Aorta (tissue), 5 donors: ENCODE measurements at regions of chr6 and their contacts with region 1.

Region 1: DNA sequence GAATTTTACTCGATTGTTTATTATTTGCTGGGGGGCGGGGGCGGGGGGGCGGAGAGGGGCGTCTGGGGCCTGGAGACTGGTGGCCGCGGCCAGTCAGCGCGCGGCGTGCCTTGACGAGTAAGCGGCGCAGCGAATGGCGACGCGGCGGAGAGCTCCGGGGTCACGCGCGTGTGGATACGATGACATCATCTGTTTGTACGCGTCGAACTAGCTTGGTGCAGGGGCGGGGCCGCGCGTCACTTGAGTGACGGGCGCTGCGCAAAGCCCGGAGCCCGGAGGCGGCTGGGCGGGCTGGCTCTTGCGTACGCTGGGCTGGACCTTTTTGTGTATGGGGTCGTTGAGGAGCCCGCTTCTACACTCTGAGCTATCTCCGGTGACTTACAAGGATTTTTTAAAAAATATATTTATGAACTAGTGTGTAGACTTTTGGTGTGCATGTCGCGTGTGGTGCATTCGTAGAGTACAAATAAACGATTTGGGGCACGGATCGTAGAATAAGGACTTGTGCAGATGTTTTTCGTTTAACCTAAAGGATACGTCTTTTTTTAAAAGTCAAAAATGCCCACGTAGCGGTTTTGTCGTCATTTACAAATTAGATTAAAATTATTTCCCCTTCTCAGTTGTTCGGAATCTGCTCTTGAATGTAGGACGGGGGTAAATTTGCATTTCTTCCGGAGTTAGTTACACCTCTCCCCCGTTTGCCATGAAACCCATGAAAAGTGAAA is 2.2 kb upstream of the FOXO3 start:
- DNase-seq: peak; percentile 99
- ATAC-seq: peak; percentile 89
- H3K4me3 ChIP-seq: peak overlapping the region; percentile 57 to 94
- H3K27ac ChIP-seq: peak overlapping the region; percentile 58 to 93
- H3K4me1 ChIP-seq: no peaks in the 10 kb centered on the region
- H3K27me3 ChIP-seq: no peaks in the 10 kb centered on the region

Region 2: GRCh38 chr6:108651340-108652227 is 93.0 kb after region 1 on chr6:
- intact Hi-C with region 1: loop called in 1 of 2 experiments (anchors 2 kb)
- DNase-seq: peak; percentile 66 to 79
- ATAC-seq: peak; percentile 62
- H3K4me3 ChIP-seq: no peak overlapping the region
- H3K27ac ChIP-seq: peak overlapping the region; percentile 86 to 98
- H3K4me1 ChIP-seq: peaks cover 7 to 48% of the 10 kb centered on the region in 2 donors
- H3K27me3 ChIP-seq: no peaks in the 10 kb centered on the region

Region 3: GRCh38 chr6:108782179-108783041 is 223.9 kb after region 1 on chr6:
- intact Hi-C with region 1: loop called (anchors 5 kb)
- DNase-seq: peak; percentile 88 to 93
- ATAC-seq: peak; percentile 91
- H3K4me3 ChIP-seq: no peak overlapping the region
- H3K27ac ChIP-seq: no peak overlapping the region
- H3K4me1 ChIP-seq: no peaks in the 10 kb centered on the region
- H3K27me3 ChIP-seq: no peaks in the 10 kb centered on the region

Region 4: DNA sequence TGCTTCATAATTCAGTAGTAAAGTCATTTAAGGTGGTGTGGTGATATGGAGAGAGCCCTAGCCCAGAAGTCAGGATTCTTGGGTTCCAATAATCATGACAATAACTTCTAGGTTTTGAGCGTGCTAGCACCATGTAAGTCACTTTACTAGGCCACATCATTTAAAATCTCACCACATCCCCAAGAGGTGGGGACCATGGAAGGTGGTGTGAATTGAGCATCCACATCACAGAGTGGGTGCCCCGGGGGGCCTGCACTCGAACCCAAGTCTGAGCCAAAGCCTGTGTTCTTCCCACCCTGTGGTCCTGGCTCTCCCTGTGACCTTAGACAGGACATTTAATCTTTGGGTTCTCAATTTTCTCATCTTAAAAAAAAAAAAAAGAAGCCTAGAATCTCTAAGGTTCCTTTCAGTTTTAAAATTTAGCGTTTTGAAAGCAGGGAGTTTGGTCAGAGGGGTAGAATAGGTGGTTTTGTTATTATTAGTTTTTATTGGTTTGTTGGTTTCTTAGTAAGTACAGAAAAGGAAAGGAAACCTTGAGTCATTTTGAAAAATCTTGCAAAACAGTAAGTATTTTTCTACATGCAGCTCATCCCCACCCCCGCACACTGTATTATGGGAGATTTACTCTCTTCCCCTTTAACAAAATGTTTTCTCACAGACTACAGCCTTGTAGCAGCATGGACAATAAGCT is 316.1 kb after region 1 on chr6:
- intact Hi-C with region 1: loop called in 1 of 2 experiments (anchors 5 kb)
- DNase-seq: peak in 1 of 2 donors; percentile 65
- ATAC-seq: no peak
- H3K4me3 ChIP-seq: no peak overlapping the region
- H3K27ac ChIP-seq: peak overlapping the region; percentile 36 to 46
- H3K4me1 ChIP-seq: no peaks in the 10 kb centered on the region
- H3K27me3 ChIP-seq: no peaks in the 10 kb centered on the region

Region 5: DNA sequence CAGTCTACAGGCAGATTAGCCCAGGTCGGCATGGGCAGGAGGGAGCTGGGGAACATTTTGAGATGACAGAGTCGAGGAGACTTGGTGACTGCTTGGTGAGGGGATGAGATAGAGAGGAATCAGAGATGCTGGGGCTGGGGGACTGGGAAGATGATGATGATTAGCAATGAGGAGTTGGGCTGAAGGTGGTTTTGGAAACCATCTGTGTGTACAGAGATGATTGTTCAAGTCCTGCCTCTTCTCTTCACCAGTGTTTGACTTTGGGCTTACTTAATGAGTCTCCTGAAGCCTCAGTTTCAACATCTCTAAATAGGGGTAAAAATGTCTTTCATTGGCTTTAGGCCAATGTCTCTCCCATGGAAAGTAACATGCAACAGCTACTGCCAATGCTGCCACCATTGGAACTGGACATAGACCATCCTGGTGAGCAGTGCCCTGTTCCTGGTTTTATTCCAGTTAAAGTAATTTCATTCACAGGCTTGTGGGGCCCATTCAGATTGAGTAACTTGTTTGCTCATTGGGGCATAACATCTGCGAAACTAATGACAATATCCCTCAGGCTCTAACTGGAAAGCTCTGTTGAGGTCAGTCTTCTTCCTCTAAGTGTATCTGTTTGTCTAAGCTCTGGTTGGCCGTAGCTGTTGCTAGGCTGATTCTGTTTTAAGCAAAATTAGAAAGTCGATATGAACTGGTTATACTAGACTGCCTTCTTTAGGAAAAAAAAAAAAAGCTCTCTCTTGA is 388.8 kb after region 1 on chr6:
- intact Hi-C with region 1: loop called in 1 of 2 experiments (anchors 5 kb)
- DNase-seq: no peak
- ATAC-seq: peak; percentile 49
- H3K4me3 ChIP-seq: no peak overlapping the region
- H3K27ac ChIP-seq: peak overlapping the region; percentile 94 to 97
- H3K4me1 ChIP-seq: peaks cover 9 to 11% of the 10 kb centered on the region in 2 donors
- H3K27me3 ChIP-seq: no peaks in the 10 kb centered on the region